Left colon (tissue), 2 donors: ENCODE measurements at regions of chr4 and their contacts with region 1.

Region 1: GRCh38 chr4:154506253-154506652 is 14.7 kb upstream of the DCHS2 start:
- DNase-seq: no peak
- ATAC-seq: peak; percentile 34

Region 2: DNA sequence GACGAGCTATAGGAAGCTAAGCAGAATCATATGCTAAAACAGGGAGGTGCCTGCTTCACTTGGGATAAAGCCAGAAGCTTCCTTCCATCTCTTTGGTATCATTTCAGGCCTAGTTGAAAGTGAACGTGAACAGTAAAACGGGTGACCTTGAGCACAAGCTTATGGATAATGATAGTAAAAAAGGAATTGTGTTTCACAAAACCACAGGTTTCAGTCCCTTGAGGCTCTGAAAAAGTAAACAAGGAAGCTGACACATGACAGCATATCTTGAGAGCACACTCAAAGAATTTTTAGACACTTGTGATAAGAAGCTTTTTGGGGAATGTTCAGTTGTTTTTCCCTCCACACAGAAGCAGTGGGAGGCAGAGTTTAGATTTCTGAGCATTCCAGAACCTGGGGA is 300.8 kb before region 1 on chr4:
- intact Hi-C with region 1: no loop called
- DNase-seq: no peak
- ATAC-seq: no peak

Region 3: DNA sequence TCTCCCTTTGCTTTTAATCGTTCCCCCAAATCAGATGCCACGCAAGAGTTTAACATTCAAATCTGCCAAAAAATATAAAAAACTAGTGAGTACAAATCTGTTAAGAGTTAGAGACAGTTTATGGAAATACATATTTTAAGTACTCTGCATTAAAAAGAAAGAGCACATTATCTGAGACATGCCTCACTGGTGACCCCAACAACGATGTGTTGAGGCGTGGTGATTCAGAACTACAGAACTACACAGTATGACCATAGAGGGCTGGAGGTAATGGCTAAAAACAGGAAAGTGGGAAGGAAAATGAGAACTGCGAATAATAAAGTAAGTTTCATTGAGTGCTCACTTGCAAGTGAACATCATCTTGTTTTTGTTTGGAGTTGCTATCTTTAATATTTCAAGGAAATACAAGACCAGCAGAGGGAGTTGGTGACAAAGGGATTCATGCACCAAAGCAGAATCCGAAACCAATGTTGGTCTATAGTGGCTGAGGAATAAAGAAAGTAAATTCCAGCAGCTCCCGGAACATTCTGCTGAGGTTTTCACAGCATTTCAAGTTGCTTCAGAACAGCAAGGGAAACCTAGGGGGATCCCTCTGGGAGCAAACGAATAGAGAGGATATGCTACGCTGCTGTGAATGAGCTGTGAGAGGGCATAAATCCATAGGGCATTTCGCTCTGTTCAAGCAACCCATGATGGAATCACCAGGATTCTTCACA is 106.8 kb before region 1 on chr4:
- intact Hi-C with region 1: loop called in 1 of 2 experiments (anchors 5 kb)
- DNase-seq: no peak
- ATAC-seq: peak; percentile 31

Region 4: GRCh38 chr4:154642373-154643009 is 136.2 kb after region 1 on chr4:
- intact Hi-C with region 1: no loop called
- DNase-seq: no peak
- ATAC-seq: no peak

Region 5: DNA sequence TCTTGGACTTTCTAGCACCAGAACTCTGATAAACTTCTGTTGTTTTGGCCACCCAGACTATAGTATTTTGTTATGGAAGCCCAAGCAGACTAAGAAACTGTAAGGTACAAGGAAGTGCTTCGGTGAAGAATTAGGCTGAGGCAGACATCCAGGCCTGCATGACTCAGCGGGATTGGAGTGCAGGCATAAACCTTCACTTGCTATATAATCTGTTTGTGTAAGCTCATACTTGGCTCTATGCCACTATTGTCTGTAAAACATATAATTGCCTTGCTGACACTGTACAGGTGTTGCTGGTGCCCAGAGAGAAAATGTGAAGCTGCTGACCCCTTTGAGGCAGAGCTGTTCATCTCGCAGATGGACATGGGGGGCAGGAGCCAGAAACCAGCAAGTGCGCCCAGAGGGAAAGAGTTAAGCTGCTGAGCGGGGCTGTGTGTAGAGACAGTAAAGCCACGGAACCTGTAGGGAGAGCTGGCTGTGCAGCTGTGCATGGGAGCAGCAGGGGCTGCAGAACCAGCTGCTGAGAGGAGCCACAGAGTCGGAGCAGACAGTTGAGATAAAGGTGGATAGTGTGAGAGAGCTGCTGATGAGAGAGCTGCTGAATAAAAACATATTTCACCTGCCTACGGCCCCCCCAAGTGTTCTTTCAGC is 371.0 kb after region 1 on chr4:
- intact Hi-C with region 1: no loop called
- DNase-seq: peak in 1 of 2 donors; percentile 34
- ATAC-seq: peak; percentile 64